Transverse colon (tissue), 4 donors: ENCODE measurements at regions of chr2 and their contacts with region 1.

Region 1: DNA sequence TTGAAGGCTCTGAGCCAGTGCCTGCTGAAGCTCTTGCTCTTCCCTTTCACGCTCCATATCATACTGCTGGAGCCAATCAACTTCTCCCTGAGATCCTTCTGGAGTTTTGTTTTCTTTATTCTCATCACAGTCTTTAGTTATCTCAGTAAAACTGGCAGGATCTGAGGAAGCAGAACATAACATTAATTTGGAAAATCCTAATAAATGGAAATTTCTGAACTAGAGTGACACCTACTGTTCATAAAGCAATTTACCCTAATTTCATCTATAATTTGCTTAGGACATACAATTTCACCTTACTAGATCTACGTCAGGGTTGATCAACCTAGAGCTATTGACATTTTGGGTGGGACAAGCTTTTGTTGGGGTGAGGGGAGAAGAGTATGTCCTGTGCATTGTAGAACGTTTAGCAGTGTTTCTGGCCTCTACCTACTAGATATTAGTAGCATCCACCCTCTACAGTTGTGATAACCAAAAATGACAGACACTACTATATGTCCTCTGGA is 47.1 kb downstream of the VIL1 start:
- DNase-seq: no peak
- H3K4me3 ChIP-seq: no peak overlapping the region
- H3K27ac ChIP-seq: no peak overlapping the region
- H3K4me1 ChIP-seq: peaks cover 0 to 2% (median 0%) of the 10 kb centered on the region in 4 donors
- H3K27me3 ChIP-seq: no peaks in the 10 kb centered on the region
- CTCF ChIP-seq: peak; percentile 40 to 62 (median 57)
- EP300 ChIP-seq: no peak
- POLR2A ChIP-seq: no peak

Region 2: DNA sequence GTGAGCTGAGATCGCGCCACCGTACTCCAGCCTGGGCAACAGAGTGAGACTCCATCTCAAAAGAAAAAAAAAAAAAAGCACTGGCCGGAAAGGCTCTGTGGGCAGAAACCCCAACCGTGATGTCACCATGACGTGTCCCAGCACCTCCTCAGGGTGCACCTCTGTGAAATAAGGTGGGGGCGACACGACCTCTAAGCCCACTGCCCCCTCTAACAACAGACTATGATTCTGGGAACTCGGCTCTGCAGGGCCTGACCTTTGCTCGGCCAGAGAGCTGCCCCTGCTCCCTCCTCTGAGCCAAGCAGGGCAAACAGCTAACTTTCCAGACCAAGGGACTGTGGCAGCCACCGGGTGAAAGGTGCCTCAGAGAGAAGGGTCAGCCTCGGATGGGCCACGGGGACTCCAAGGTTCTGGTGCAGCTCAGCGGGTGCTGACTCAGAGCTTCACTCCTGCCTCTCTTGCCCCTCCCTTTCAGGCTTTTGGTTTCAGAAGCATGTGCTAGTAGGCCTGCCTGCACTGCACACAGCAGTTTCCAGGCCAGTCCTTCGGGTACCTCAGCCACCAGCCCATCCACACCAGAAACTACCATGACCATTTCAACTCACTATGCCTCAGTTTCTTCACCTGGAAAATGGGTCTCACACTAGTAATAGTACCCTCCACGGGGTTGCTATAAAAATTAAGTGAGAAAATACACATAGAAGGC is 181.8 kb before region 1 on chr2:
- in situ Hi-C with region 1: no loop called
- intact Hi-C with region 1: no loop called
- DNase-seq: peak; percentile 75
- H3K4me3 ChIP-seq: no peak overlapping the region
- H3K27ac ChIP-seq: peak overlapping the region; percentile 96 to 98 (median 98)
- H3K4me1 ChIP-seq: peaks cover 61 to 82% (median 78%) of the 10 kb centered on the region in 4 donors
- H3K27me3 ChIP-seq: no peaks in the 10 kb centered on the region
- CTCF ChIP-seq: no peak
- EP300 ChIP-seq: no peak
- POLR2A ChIP-seq: no peak

Region 3: DNA sequence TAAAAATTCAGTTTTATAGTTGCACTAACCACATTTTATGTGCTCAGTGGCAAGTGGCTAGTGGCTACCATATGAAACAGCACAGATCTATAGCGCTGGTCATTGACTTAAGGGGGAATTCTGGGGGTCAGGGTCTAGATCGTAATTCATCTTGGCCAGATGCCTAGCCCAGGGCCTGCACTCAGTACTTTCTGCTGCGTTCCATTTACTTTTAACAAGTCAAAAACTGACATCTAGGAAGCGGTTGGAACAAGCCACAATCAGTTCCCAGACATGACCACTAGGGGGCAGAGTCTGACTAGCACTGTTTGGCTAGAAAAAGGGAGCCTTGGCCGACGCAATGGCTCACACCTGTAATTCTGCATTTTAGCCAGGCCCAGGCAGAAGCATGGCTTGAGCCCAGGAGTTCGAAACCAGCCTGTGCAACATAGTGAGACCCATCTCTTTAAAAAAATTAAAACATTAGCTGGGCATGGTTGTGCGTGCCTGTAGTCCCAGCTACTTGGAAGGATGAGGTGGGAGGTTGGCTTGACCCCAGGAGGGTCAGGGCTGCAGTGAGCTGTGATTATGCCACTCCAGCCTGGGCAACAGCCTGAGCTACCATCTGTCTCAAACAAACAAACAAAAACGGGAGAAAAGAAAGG is 164.8 kb before region 1 on chr2:
- in situ Hi-C with region 1: loop called in 1 of 4 experiments (anchors 10 kb)
- intact Hi-C with region 1: no loop called
- DNase-seq: peak; percentile 93
- H3K4me3 ChIP-seq: no peak overlapping the region
- H3K27ac ChIP-seq: peak overlapping the region in 1 of 4 donors; percentile 33
- H3K4me1 ChIP-seq: peaks cover 0 to 7% (median 1%) of the 10 kb centered on the region in 4 donors
- H3K27me3 ChIP-seq: no peaks in the 10 kb centered on the region
- CTCF ChIP-seq: peak; percentile 96 to 98 (median 97)
- EP300 ChIP-seq: no peak
- POLR2A ChIP-seq: no peak

Region 4: GRCh38 chr2:218343591-218343990 is 122.5 kb before region 1 on chr2:
- in situ Hi-C with region 1: no loop called
- intact Hi-C with region 1: no loop called
- DNase-seq: no peak
- H3K4me3 ChIP-seq: no peak overlapping the region
- H3K27ac ChIP-seq: no peak overlapping the region
- H3K4me1 ChIP-seq: no peaks in the 10 kb centered on the region
- H3K27me3 ChIP-seq: no peaks in the 10 kb centered on the region
- CTCF ChIP-seq: no peak
- EP300 ChIP-seq: no peak
- POLR2A ChIP-seq: no peak

Region 5: DNA sequence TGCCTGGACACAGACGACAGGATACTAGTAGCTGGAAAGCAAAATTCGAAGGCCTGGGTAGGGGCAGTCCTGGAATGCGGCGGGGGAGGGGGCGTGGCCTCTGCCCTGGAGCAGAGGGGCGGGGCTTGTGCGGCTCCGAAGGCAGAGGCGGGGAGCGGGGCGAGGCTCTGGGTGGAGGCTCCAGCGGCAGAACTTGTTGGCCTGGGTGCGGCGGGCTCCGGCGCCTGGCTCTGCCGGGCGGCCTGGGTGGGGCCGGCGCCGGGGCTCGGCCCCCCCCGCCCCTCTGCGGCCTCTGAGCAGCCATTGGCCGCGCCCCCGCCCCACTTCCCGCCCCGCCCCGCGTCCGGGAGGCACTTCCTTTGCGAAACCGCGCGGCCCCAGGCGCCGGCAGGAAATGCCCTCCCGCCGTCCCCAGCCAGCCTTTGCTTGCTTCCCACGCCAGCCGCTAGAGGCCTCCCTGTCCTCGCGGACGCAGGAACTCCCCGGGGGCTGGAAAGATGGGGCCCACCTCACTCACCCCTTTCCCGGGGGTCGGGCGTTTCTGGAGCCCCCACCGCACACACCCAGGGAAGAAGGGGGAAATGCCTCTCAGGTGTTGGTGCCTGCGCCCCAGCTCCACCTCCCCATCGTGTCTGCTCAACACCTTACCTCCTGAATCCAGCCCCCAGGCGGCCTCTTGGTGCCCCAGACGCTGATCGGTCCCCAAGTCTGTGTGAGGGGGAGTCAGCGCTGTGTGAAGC is 59.7 kb before region 1 on chr2:
- in situ Hi-C with region 1: loop called in 2 of 4 experiments (anchors 10 kb)
- intact Hi-C with region 1: loop called (anchors 2 kb)
- DNase-seq: peak; percentile 98
- H3K4me3 ChIP-seq: peak overlapping the region; percentile 17 to 54 (median 32)
- H3K27ac ChIP-seq: peak overlapping the region; percentile 89 to 98 (median 92)
- H3K4me1 ChIP-seq: peaks cover 27 to 54% (median 37%) of the 10 kb centered on the region in 4 donors
- H3K27me3 ChIP-seq: no peaks in the 10 kb centered on the region
- CTCF ChIP-seq: peak; percentile 67 to 94 (median 86)
- EP300 ChIP-seq: no peak
- POLR2A ChIP-seq: peak; percentile 53

Region 6: GRCh38 chr2:218418717-218419458 is 47.2 kb before region 1 on chr2 and contains the start of gene VIL1:
- in situ Hi-C with region 1: loop called in 2 of 4 experiments (anchors 10 kb)
- intact Hi-C with region 1: no loop called
- DNase-seq: peak; percentile 93
- H3K4me3 ChIP-seq: peak within 1 kb of the TSS in 3 of 4 donors; percentile 30 to 55 (median 44)
- H3K27ac ChIP-seq: peak within 1 kb of the TSS; percentile 77 to 88 (median 80)
- H3K4me1 ChIP-seq: peaks cover 4 to 19% (median 13%) of the 10 kb centered on the region in 4 donors
- H3K27me3 ChIP-seq: no peaks in the 10 kb centered on the region
- CTCF ChIP-seq: no peak
- EP300 ChIP-seq: no peak
- POLR2A ChIP-seq: peak; percentile 88
- total RNA-seq, gene VIL1: 177 to 541 (median 285) TPM

Region 7: GRCh38 chr2:218582076-218582475 is 116.0 kb after region 1 on chr2:
- in situ Hi-C with region 1: no loop called
- intact Hi-C with region 1: no loop called
- DNase-seq: no peak
- H3K4me3 ChIP-seq: no peak overlapping the region
- H3K27ac ChIP-seq: no peak overlapping the region
- H3K4me1 ChIP-seq: peaks cover 0 to 4% (median 0%) of the 10 kb centered on the region in 4 donors
- H3K27me3 ChIP-seq: no peaks in the 10 kb centered on the region
- CTCF ChIP-seq: no peak
- EP300 ChIP-seq: no peak
- POLR2A ChIP-seq: no peak